ENCODE measurements at regions of chr4 and their contacts with region 1.

Region 1: GRCh38 chr4:176499518-176499917 is 179.8 kb downstream of the SPCS3 start:
- DNase-seq: no peak
- ATAC-seq: no peak
- H3K4me3 ChIP-seq: no peak overlapping the region
- H3K27ac ChIP-seq: no peak overlapping the region
- H3K4me1 ChIP-seq: no peaks in the 10 kb centered on the region
- H3K27me3 ChIP-seq: no peaks in the 10 kb centered on the region
- CTCF ChIP-seq: no peak

Region 2: GRCh38 chr4:176320976-176321361 is 178.5 kb before region 1 on chr4:
- CTCF ChIA-PET with region 1: no interaction called
- POLR2A ChIA-PET with region 1: interaction called, 10 read pairs
- in situ Hi-C with region 1: no loop called
- intact Hi-C with region 1: no loop called
- DNase-seq: no peak
- ATAC-seq: no peak
- H3K4me3 ChIP-seq: peak overlapping the region; percentile 77 to 93
- H3K27ac ChIP-seq: peak overlapping the region; percentile 85
- H3K4me1 ChIP-seq: peaks cover 2% of the 10 kb centered on the region; the same call in 1 of the 2 replicates
- H3K27me3 ChIP-seq: no peaks in the 10 kb centered on the region
- CTCF ChIP-seq: no peak

Measured in Panc1 (cell line).